ENCODE measurements at regions of chr4 and their contacts with region 1.

Region 1: DNA sequence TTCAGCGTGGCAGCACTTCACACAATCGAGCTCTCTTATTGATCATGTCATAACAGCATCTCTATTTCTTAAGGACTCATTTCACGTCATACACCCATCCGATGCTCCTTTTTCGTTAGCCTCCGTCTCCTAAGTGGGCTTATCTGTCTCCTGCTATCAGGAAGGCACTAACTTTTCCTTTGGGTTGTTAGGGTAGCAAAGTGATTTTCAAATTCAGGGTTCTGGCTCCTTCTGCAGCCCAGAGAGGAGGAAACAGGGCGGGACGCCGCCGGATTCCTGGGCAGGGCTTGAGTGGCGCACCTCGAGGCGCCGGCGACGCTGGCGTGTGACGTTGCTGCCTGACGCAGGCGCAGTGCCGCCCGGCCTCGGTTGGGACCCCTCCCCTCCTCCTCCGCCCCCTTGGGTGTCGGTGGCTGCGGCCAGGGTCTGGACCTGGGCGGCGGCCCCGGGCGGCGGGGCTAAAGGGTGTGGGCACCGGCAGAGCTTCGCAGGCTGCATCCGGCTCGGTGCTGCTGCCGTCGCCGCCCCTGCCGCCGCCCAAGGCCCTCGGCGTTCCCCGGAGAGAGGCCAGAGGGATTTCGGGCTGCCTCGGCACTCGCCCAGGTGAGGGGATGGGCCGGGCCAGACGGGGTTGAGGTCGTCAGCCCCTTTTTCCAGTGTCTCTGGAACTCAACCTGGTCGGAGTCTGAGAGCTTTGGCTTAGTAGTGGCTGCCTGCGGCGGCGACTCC is at the start of gene BLTP1:
- DNase-seq: peak; percentile 91
- H3K4me3 Mint-ChIP-seq: peak within 1 kb of the TSS; percentile 92
- H3K27ac Mint-ChIP-seq: peak within 1 kb of the TSS; percentile 93
- H3K4me1 Mint-ChIP-seq: peaks cover 51% of the 10 kb centered on the region
- H3K27me3 Mint-ChIP-seq: no peaks in the 10 kb centered on the region
- total RNA-seq, gene BLTP1: 26.6 to 30.7 TPM

Region 2: GRCh38 chr4:121800961-121801714 is 351.0 kb before region 1 on chr4 and contains the start of gene EXOSC9:
- CTCF ChIA-PET with region 1: no interaction called
- POLR2A ChIA-PET with region 1: no interaction called
- intact Hi-C with region 1: loop called (anchors 1 kb)
- DNase-seq: peak; percentile 95
- H3K4me3 Mint-ChIP-seq: peak within 1 kb of the TSS; percentile 84
- H3K27ac Mint-ChIP-seq: peak within 1 kb of the TSS; percentile 94
- H3K4me1 Mint-ChIP-seq: peaks cover 45% of the 10 kb centered on the region
- H3K27me3 Mint-ChIP-seq: no peaks in the 10 kb centered on the region
- total RNA-seq, gene EXOSC9: 65.9 to 68.0 TPM

Region 3: DNA sequence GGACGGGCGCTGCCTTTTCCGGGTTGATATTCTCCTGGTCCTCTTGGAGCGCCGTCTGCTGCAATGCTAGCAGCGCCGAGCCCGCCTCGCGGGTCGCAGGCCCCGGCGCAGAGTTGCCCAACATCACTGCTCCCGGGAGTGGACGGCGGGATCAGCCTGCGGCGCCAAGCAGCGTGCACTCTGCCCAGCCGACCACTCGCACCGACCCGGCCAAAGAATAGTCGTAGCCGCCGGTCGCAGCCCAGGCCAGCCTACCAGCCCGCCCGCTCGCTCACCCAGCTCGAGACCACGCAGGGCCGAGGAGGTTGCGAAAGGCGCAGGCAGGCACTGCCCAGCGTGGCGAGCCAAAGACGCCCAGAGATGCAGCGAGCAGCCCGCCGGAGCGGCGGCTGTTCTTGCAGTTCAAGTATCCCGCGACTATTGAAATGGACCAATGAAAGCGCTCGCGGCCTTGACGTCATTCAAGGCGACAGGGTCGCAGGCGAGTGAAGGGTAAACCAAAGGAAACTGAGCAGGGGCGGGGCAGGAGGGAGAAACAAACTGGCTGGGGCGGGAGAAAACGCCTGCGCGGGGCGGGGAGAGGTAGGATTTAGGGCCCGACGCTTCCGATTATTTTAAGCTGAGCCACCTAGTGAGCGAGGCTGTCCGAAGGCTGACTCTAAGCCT is 328.5 kb before region 1 on chr4 and contains the start of gene CCNA2:
- CTCF ChIA-PET with region 1: no interaction called
- POLR2A ChIA-PET with region 1: no interaction called
- intact Hi-C with region 1: loop called (anchors 1 kb)
- DNase-seq: peak; percentile 99
- H3K4me3 Mint-ChIP-seq: peak within 1 kb of the TSS; percentile 97
- H3K27ac Mint-ChIP-seq: peak within 1 kb of the TSS; percentile 81
- H3K4me1 Mint-ChIP-seq: peaks cover 25% of the 10 kb centered on the region
- H3K27me3 Mint-ChIP-seq: no peaks in the 10 kb centered on the region
- total RNA-seq, gene CCNA2: 98.2 to 100 TPM

Region 4: DNA sequence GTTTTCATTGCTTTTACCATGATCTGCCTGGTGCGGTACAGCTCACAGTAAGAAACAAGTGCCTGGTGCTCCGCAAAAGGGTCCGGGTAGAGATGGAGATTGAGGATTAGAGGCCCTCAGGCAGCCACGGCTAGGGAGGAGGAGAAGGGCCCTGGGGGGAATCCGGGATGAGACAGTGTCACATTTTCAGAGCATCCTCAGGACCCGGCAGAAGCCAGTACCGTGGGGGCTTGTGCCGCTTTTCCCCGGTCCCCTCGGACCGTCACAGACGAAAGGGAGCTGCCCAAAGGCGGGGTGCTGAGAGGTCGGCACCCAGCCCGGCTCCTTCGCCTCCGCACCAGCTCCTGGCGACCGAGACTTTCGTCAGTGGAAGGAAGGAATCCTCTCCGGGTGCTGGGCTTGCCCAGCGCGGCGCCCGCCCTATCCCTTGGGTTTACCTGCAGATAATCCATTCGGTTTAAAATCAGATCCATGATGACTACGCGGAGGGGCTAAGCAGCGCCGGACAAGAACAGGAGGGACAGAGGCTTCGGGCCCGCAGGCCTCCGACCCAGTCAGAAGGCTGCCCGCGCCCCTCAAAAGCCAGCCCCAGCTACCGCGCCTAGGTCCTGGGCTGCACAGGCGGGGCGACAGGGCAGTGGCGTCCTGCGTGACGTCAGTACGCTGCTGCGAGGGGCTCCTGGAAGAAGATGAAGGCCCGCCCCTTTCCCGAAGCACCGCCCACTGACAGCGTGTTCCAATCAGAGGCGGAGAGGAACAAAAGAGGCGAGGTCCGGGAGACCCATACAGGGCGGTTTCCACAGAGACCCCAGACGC is 282.1 kb before region 1 on chr4 and contains the start of gene BBS7:
- CTCF ChIA-PET with region 1: no interaction called
- POLR2A ChIA-PET with region 1: no interaction called
- intact Hi-C with region 1: loop called (anchors 1 kb)
- DNase-seq: peak; percentile 98
- H3K4me3 Mint-ChIP-seq: peak within 1 kb of the TSS; percentile 95
- H3K27ac Mint-ChIP-seq: peak within 1 kb of the TSS; percentile 74
- H3K4me1 Mint-ChIP-seq: peaks cover 10% of the 10 kb centered on the region
- H3K27me3 Mint-ChIP-seq: peaks cover 6% of the 10 kb centered on the region
- total RNA-seq, gene BBS7: 15.2 to 17.9 TPM

Region 5: DNA sequence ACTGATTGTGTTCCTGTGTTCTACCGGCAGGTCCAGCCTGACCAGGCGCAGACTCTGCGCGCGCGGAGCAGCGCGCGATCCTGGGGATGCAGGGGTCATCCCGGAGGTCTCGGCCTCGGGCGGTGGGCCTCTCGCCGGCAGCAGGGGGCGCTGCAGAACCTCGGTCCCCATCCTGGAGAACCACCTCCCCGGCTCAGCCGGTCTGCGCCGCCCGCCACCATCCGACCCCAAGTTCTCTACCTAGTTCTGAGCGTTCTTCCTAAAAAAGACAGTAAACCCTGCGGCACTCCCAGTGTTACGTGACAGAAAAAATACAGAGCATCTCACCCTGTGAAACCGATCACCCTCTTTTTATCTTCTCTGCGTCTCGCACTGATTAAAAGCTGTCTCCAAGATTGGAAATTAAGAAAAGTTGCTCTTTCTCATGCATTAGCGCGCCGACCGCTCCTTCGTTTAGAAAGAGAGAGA is 201.9 kb before region 1 on chr4:
- CTCF ChIA-PET with region 1: no interaction called
- POLR2A ChIA-PET with region 1: no interaction called
- intact Hi-C with region 1: loop called (anchors 1 kb)
- DNase-seq: peak; percentile 91
- H3K4me3 Mint-ChIP-seq: peak overlapping the region; percentile 89
- H3K27ac Mint-ChIP-seq: peak overlapping the region; percentile 19
- H3K4me1 Mint-ChIP-seq: peaks cover 9% of the 10 kb centered on the region
- H3K27me3 Mint-ChIP-seq: peaks cover 15% of the 10 kb centered on the region

Region 6: GRCh38 chr4:122131562-122132157 is 20.5 kb before region 1 on chr4:
- CTCF ChIA-PET with region 1: no interaction called
- POLR2A ChIA-PET with region 1: no interaction called
- intact Hi-C with region 1: loop called (anchors 1 kb)
- DNase-seq: no peak
- H3K4me3 Mint-ChIP-seq: no peak overlapping the region
- H3K27ac Mint-ChIP-seq: peak overlapping the region; percentile 80
- H3K4me1 Mint-ChIP-seq: peaks cover 24% of the 10 kb centered on the region
- H3K27me3 Mint-ChIP-seq: no peaks in the 10 kb centered on the region

Region 7: GRCh38 chr4:122364700-122365404 is 212.7 kb after region 1 on chr4:
- CTCF ChIA-PET with region 1: no interaction called
- POLR2A ChIA-PET with region 1: no interaction called
- intact Hi-C with region 1: no loop called
- DNase-seq: peak; percentile 30
- H3K4me3 Mint-ChIP-seq: no peak overlapping the region
- H3K27ac Mint-ChIP-seq: no peak overlapping the region
- H3K4me1 Mint-ChIP-seq: no peaks in the 10 kb centered on the region
- H3K27me3 Mint-ChIP-seq: no peaks in the 10 kb centered on the region

Region 8: GRCh38 chr4:122732329-122733026 is 580.3 kb after region 1 on chr4 and contains the start of gene BBS12:
- CTCF ChIA-PET with region 1: no interaction called
- POLR2A ChIA-PET with region 1: no interaction called
- intact Hi-C with region 1: loop called (anchors 5 kb)
- DNase-seq: peak; percentile 100
- H3K4me3 Mint-ChIP-seq: peak within 1 kb of the TSS; percentile 87
- H3K27ac Mint-ChIP-seq: peak within 1 kb of the TSS; percentile 87
- H3K4me1 Mint-ChIP-seq: peaks cover 27% of the 10 kb centered on the region
- H3K27me3 Mint-ChIP-seq: no peaks in the 10 kb centered on the region
- total RNA-seq, gene BBS12: 3.7 to 4.3 TPM